ENCODE measurements at regions of chr14 and their contacts with region 1.

Region 1: GRCh38 chr14:65824285-65824977 is 411.9 kb downstream of the FUT8 start:
- DNase-seq: peak; percentile 65

Region 2: DNA sequence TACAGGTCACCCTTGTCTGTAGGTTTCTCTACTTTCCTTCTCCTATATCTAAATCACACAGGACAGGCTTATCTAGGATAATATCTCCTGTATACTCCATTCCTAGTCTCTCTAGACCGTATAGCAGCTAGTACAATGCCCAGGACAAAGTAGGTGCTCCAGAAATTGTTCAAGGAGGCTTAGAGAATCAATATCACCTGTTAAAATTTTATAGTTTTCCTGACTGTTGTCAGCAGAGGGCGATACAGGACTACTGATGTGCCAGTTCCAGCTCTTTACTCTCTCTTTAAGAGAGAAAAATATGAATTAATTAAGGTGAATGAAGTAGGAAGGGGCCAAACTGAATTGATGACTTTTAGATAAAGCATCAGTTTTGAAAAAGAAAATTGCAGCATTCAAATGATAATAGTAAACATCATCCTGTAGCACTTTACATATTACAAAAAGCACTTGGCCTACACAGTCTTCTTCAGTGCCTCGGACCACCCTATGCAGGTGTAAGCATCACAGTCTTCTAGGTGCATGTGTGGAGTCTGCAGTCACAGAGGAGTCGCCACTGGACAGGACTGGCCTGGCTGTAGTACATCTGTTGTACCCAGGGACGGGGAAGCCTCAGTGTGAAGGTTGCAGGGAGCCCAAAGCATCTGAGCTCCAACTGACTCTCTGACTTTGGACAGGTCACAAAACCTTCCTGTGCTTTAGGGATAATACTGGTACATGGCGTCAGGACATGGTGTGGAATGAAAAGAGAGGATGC is 660.2 kb before region 1 on chr14:
- CTCF ChIA-PET with region 1: interaction called, 10 read pairs
- POLR2A ChIA-PET with region 1: no interaction called
- DNase-seq: peak; percentile 47

Region 3: GRCh38 chr14:65813760-65814384 is 10.6 kb before region 1 on chr14:
- CTCF ChIA-PET with region 1: interaction called, 16 read pairs
- POLR2A ChIA-PET with region 1: no interaction called
- DNase-seq: no peak

Measured in HEK293T (cell line).